Vagina (tissue), 2 donors: ENCODE measurements at regions of chr4 and their contacts with region 1.

Region 1: GRCh38 chr4:84966383-84967242 is at the start of gene WDFY3:
- DNase-seq: peak in 1 of 2 donors; percentile 95
- H3K4me3 ChIP-seq: peak within 1 kb of the TSS; percentile 91
- H3K27ac ChIP-seq: peak within 1 kb of the TSS; percentile 94
- H3K4me1 ChIP-seq: peaks cover 22% of the 10 kb centered on the region
- H3K27me3 ChIP-seq: no peaks in the 10 kb centered on the region
- CTCF ChIP-seq: peak in 1 of 3 experiments; percentile 9
- POLR2A ChIP-seq: peak in 1 of 2 donors; percentile 49
- total RNA-seq, gene WDFY3: 67.8 TPM

Region 2: GRCh38 chr4:84750253-84750959 is 216.2 kb before region 1 on chr4:
- intact Hi-C with region 1: loop called (anchors 2 kb)
- DNase-seq: no peak
- H3K4me3 ChIP-seq: no peak overlapping the region
- H3K27ac ChIP-seq: no peak overlapping the region
- H3K4me1 ChIP-seq: no peaks in the 10 kb centered on the region
- H3K27me3 ChIP-seq: no peaks in the 10 kb centered on the region
- CTCF ChIP-seq: peak; percentile 49 to 62 (median 56)
- POLR2A ChIP-seq: no peak